ENCODE measurements at regions of chr1 and their contacts with region 1.

Region 1: DNA sequence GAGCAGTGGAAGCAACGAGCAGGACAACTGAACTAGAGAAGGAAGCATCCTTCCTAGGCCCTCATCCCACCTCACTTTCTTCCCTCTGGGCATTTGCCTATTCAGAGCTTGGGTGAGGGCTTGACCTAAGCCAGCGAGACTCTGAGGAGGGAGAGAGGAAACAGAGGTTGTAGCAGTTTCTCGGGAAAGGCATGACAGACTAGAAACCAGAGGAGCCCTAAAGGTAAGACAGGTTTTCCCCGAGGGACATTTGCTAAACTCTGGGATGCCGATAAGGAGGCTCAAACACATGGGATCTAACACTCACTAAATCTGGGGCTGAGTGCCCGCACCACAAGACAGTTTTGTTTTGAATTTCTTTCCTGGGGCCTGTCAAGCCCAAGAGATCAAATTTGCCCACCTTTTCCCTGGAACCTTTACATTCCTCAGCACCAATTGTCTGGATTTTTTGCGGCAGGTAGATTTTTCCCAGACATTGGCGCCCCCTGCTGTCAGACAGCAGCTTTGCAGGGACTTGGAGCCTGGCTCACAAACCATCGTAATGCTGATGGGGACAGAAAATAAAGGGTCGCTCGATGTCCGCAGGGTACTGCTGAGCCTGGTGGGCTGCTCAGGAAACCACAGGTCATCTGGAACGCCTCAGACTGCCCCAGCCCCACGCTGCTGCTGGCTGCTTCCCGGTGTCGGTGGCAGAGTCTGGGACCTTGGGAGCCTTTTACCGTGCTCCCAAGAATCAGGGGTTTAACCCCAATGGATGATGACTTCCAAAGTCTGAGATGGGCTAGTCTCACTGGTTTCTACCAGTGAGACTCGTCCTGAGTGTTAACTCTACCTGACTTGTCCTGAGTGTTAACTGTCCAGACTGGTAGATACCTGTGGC is 23.4 kb upstream of the TSPAN2 start:
- H3K4me3 ChIP-seq: no peak overlapping the region
- H3K27ac ChIP-seq: no peak overlapping the region
- H3K4me1 ChIP-seq: no peaks in the 10 kb centered on the region; the same call in 1 of the 2 replicates
- CTCF ChIP-seq: peak; percentile 61

Region 2: GRCh38 chr1:114979278-114979891 is 133.4 kb before region 1 on chr1:
- CTCF ChIA-PET with region 1: interaction called, 27 read pairs
- POLR2A ChIA-PET with region 1: no interaction called
- H3K4me3 ChIP-seq: no peak overlapping the region
- H3K27ac ChIP-seq: no peak overlapping the region
- H3K4me1 ChIP-seq: no peaks in the 10 kb centered on the region
- CTCF ChIP-seq: peak; percentile 50; the same call in 1 of the 2 replicates

Region 3: DNA sequence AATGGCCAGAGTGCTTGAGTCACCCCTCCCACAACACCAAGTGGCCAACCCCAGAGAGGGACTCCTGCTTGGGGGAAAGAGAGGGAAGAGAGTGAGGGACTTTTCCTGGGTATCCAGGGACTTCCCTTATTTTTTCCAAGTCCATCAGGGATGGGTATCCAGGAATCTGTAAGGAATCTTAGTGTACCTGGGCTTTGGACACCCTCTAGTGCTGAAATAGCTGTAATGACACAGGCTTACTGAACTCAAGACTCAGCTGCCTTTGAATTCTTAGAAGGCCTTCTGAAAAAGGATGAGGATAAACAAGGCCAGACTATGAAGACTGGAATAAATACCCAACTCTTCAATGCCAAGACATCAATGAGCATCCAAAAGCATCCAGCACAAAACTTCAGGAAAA is 71.1 kb before region 1 on chr1:
- CTCF ChIA-PET with region 1: interaction called, 23 read pairs
- POLR2A ChIA-PET with region 1: no interaction called
- H3K4me3 ChIP-seq: no peak overlapping the region
- H3K27ac ChIP-seq: no peak overlapping the region
- H3K4me1 ChIP-seq: no peaks in the 10 kb centered on the region
- CTCF ChIP-seq: no peak

Region 4: DNA sequence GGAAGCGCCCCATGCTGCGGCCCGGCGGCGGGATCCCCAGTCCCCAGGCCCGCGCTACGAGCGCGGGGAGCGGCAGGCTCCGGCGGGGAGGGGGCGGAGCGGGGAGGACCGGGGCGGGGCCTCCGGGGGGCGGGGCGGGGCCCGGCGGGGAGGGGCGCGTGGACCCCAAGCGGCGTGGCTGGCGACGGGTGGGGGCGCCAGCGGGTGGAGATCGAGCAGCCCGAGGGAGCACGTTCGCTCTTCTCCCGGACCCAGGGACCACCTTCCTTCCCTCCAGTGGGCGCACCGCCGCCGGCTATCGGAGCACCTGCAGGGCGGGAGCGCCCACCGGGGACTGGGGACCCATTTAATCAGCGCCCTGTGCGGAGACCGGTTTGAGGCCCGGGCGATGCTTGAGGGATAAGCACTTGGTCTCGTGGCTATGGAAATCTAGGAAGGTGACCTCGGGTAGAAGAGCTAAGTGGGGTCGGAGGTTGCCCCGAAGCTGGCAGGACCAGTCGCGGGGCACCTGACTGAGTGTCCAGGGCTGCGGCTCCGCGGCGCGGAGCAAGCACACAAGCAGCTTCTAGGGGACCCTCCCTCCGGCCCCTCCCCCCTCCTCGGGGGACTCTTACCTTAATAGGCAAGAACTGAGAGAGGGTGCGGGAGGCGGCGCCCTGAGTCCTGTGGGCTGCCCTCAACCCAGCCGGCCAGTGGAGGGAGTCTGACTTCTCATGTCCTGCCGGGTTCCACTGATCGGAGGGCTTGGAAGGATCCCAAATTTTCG is 23.1 kb before region 1 on chr1 and contains the start of gene TSPAN2:
- CTCF ChIA-PET with region 1: interaction called, 15 read pairs
- POLR2A ChIA-PET with region 1: no interaction called
- H3K4me3 ChIP-seq: peak within 1 kb of the TSS; percentile 65
- H3K27ac ChIP-seq: no peak within 1 kb of the TSS; the same call in 1 of the 2 replicates
- H3K4me1 ChIP-seq: peaks cover 5% of the 10 kb centered on the region; the same call in 1 of the 2 replicates
- CTCF ChIP-seq: no peak; the same call in 1 of the 2 replicates

Region 5: DNA sequence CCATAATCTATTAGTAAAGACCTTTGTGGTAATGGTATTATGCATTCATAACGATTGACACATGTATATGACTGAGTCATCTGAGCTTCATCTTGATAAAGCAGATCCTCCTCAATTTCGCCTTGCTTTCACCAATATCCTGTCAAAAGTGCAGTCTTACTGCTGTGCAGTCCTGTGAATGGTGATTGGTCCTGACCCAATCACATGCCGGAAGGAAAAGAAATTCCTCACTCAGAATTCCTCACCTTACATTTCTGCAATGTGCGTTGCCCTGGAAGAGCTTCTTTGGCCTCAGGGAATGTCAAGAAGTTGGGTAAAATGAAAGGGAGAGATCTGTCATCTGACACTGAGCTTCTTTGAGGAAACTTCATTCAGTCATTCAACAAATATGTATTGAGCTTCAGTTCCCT is 97.6 kb after region 1 on chr1:
- CTCF ChIA-PET with region 1: no interaction called
- POLR2A ChIA-PET with region 1: no interaction called
- H3K4me3 ChIP-seq: no peak overlapping the region
- H3K27ac ChIP-seq: no peak overlapping the region
- H3K4me1 ChIP-seq: no peaks in the 10 kb centered on the region
- CTCF ChIP-seq: no peak

Region 6: DNA sequence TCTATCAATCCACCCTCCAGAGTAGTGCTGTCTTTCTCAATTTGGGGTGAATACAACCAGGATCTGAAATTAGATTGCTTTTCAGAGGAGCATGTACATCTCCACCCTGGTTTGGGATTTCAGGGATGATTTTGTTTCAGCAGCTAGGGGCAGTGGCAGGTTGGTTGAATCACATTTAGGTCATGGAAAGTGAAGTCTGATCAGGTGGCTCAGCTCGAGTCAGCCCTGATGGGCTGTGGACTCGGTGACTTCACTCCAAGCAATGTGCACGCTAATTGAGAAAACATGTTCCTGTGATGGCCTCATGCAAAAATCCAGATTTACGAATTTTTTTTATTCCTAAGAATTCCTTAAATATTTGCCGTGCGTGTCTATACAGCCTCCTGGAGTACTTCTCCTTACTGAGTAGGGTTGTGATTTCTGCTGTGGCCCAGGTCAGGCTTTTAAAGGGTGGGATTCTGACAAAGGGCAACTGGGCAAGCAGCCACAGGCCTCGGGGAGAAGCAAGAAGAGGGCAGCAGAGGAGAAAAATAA is 217.8 kb after region 1 on chr1:
- CTCF ChIA-PET with region 1: no interaction called
- POLR2A ChIA-PET with region 1: no interaction called
- H3K4me3 ChIP-seq: no peak overlapping the region
- H3K27ac ChIP-seq: no peak overlapping the region
- H3K4me1 ChIP-seq: no peaks in the 10 kb centered on the region
- CTCF ChIP-seq: no peak